ENCODE measurements at regions of chr14 and their contacts with region 1.

Region 1: DNA sequence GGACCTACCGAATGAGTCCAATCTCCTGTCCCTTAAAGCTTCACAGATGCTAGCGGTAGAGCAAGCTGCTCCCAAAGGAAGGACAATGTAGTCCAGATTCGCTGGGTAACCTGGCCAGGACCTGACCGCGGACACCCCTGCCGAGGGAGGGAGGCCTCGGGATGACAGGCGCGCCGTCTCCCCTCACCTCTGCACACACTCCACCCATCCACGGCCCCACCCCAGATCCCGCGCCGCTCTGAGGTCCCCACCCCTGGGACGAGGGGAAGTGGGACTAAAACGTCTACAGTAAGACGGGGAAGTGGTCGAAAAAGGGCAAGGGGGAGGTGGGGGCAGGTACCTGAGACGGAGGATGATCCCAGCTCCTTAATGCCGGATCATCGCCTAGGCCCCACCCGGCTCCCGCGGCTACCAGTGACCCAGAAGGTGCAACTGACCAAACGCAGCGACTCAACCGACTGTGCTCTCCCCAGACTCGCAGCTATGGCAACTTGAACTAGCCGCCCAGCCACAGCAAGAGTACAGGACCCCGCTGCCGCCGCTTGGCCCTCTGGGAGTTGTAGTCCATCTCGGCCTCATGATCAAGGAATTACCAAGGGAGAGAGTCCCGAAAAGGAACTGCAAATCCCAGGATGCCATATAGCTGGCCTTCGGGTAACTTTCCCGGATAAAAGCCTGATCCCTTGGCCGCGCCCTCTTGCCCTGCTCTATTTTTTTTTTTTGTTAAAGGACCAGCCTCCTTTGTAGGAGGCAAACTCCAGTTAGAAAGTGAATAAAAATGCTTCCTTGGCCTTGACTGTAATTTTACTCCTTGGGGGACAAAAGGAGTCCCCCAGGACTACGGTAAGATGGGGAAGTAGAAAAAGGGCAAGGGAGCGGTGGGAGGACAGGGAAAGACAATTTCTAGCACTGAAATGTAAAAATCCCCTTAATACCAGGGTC is at the start of gene CEP128:
- DNase-seq: peak; percentile 66 to 91 (median 83)
- ATAC-seq: peak; percentile 82
- H3K4me3 ChIP-seq: peak within 1 kb of the TSS; percentile 78
- H3K4me3 Mint-ChIP-seq: peak within 1 kb of the TSS; percentile 87
- H3K27ac ChIP-seq: peak within 1 kb of the TSS; percentile 26 to 36
- H3K27ac Mint-ChIP-seq: peak within 1 kb of the TSS; percentile 92
- H3K4me1 ChIP-seq: peaks cover 15% of the 10 kb centered on the region
- H3K4me1 Mint-ChIP-seq: peaks cover 29% of the 10 kb centered on the region
- H3K27me3 ChIP-seq: no peaks in the 10 kb centered on the region
- H3K27me3 Mint-ChIP-seq: peaks cover 2% of the 10 kb centered on the region
- CTCF ChIP-seq: no peak
- total RNA-seq, gene CEP128: 7.6 to 9.8 TPM

Region 2: GRCh38 chr14:80930836-80931389 is 10.6 kb before region 1 on chr14:
- CTCF ChIA-PET with region 1: interaction called, 3 read pairs
- POLR2A ChIA-PET with region 1: interaction called, 15 read pairs
- intact Hi-C with region 1: loop called in 1 of 2 experiments (anchors 1 kb)
- DNase-seq: peak in 7 of 9 experiments; percentile 21 to 88 (median 51)
- ATAC-seq: peak; percentile 90
- H3K4me3 ChIP-seq: peak overlapping the region in 1 of 2 experiments; percentile 16
- H3K4me3 Mint-ChIP-seq: peak overlapping the region; percentile 42
- H3K27ac ChIP-seq: peak overlapping the region; percentile 36 to 44
- H3K27ac Mint-ChIP-seq: peak overlapping the region; percentile 93
- H3K4me1 ChIP-seq: peaks cover 19% of the 10 kb centered on the region
- H3K4me1 Mint-ChIP-seq: peaks cover 34% of the 10 kb centered on the region
- H3K27me3 ChIP-seq: no peaks in the 10 kb centered on the region
- H3K27me3 Mint-ChIP-seq: no peaks in the 10 kb centered on the region
- CTCF ChIP-seq: no peak

Region 3: DNA sequence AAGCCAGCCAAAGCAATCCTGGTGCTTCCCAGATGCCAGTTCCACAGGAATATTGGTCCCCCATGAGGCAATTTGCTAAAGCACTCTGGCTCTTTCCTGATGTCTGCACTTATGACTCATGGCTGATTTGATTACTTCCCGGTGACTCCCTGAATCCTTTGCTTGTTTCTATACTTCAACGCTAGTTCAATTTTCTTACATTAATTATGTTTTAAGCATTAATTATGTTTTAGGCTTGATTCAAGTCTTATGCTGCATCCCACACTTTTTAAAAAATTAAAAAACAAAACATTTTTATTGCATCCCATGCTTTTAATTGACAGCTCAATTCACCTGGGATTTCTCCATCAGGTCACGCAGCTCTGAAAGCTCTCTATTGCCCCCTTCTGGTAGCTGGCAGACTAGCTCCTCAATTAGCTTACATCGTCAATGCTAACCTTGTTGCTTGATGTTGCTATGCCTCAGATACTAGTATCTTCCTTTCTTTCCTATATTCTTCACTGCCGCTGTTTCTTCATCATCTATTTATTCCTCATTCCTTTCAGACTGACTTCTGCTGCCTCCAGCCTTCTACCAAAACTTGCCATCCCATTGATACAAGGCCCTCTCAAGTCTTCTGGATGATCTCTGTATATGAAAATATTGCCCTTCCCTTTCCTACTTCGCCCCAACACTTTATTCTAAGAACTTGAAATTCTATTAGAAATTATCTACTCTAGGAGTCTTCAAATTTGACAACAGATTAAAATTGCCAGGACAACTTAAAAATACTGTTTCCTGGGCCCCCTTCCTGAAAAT is 45.9 kb after region 1 on chr14:
- CTCF ChIA-PET with region 1: interaction called, 15 read pairs
- POLR2A ChIA-PET with region 1: interaction called, 5 read pairs
- intact Hi-C with region 1: no loop called
- DNase-seq: peak; percentile 38 to 80 (median 63)
- ATAC-seq: peak; percentile 82
- H3K4me3 ChIP-seq: no peak overlapping the region
- H3K4me3 Mint-ChIP-seq: no peak overlapping the region
- H3K27ac ChIP-seq: no peak overlapping the region
- H3K27ac Mint-ChIP-seq: no peak overlapping the region
- H3K4me1 ChIP-seq: no peaks in the 10 kb centered on the region
- H3K4me1 Mint-ChIP-seq: no peaks in the 10 kb centered on the region
- H3K27me3 ChIP-seq: no peaks in the 10 kb centered on the region
- H3K27me3 Mint-ChIP-seq: peaks cover 2% of the 10 kb centered on the region
- CTCF ChIP-seq: peak; percentile 96

Region 4: DNA sequence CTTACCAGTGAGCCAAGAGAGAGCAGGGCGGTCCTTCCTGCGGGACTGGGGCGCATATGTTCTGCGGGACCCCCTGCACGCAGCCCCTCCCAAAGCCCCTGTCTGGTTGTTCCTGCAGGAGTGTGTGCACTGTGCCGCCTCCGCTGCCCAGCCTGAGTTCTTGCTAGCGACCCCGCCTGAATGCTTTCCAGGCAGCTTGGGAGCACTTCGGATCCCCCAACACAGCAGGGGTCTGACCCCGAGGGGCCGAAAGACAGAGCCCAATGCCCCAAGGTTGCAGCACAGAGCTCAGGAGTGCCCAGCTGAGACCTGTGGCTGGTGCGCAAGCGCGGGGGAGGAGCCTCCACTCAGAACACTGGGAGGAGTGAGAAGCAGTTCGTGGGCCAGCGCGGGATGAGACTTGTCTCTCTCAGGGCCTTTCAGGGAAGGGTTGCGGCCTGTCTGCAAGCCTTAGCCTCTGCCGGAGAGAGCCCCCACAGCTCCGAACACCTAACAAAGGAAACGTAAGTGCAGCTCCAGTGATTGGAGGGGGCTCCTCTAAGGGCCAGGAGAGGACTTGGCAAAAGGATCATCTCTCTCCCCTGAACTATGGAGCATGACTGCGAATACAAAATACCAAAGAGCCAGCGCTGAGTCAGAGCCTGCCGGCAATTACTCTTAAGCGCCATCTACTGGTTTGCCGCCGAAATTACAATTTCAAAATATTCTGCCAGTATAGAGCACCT is 228.8 kb after region 1 on chr14:
- CTCF ChIA-PET with region 1: no interaction called
- POLR2A ChIA-PET with region 1: no interaction called
- intact Hi-C with region 1: loop called in 1 of 2 experiments (anchors 1 kb)
- DNase-seq: peak; percentile 72 to 92 (median 89)
- ATAC-seq: peak; percentile 97
- H3K4me3 ChIP-seq: peak overlapping the region; percentile 67 to 70
- H3K4me3 Mint-ChIP-seq: peak overlapping the region; percentile 94
- H3K27ac ChIP-seq: peak overlapping the region; percentile 53 to 81
- H3K27ac Mint-ChIP-seq: peak overlapping the region; percentile 97
- H3K4me1 ChIP-seq: peaks cover 12% of the 10 kb centered on the region
- H3K4me1 Mint-ChIP-seq: peaks cover 20% of the 10 kb centered on the region
- H3K27me3 ChIP-seq: no peaks in the 10 kb centered on the region
- H3K27me3 Mint-ChIP-seq: no peaks in the 10 kb centered on the region
- CTCF ChIP-seq: peak; percentile 77

Region 5: DNA sequence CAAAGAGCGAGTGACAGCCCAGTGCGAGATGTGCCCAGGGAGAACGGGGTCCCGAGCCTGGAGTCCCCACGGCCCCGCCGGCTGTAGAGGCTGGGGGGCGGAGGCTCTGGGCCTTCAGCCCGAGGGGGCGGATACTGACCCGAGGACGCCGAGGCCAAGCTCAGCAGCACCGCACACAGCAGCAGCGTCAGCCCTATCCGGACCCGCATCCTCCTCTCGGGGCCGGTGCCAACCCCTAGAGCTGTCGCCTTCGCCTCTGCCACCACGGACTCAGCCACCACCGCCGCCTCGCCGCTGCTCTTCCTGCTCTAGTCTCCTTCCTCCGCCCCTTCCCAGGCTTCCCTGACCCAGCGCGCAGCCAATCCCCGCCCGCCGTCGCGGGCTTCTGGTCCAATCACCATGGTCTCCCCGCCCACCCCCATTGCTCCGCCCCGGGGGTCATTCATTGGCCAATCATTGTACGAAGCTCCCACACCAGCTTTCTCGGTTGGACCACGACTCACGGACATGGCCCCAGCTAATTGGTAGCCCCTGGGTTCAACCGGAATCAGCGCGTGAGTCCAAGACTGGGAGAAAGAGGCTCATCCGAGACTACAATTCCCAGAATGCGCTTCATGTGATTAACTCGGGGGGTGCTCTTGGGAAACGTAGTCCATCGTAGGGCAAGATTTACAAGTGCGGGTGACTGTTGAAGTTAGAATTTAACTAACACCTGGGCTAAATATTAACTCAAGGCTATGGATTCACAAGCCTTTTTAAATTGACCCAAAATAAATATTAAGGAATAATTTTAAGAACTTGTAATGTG is 592.2 kb after region 1 on chr14 and contains the start of gene SEL1L:
- CTCF ChIA-PET with region 1: no interaction called
- POLR2A ChIA-PET with region 1: interaction called, 3 read pairs
- intact Hi-C with region 1: loop called (anchors 1 to 5 kb)
- DNase-seq: peak; percentile 99 to 100 (median 99)
- ATAC-seq: peak; percentile 95
- H3K4me3 ChIP-seq: peak within 1 kb of the TSS; percentile 84 to 88
- H3K4me3 Mint-ChIP-seq: peak within 1 kb of the TSS; percentile 99
- H3K27ac ChIP-seq: peak within 1 kb of the TSS; percentile 70
- H3K27ac Mint-ChIP-seq: peak within 1 kb of the TSS; percentile 91
- H3K4me1 ChIP-seq: peaks cover 29% of the 10 kb centered on the region
- H3K4me1 Mint-ChIP-seq: peaks cover 65% of the 10 kb centered on the region
- H3K27me3 ChIP-seq: no peaks in the 10 kb centered on the region
- H3K27me3 Mint-ChIP-seq: no peaks in the 10 kb centered on the region
- CTCF ChIP-seq: no peak
- total RNA-seq, gene SEL1L: 41.2 to 46.5 TPM